ENCODE measurements at regions of chr1 and their contacts with region 1.

Region 1: GRCh38 chr1:205631727-205632373 is at the start of gene ELK4:
- DNase-seq: peak; percentile 99
- H3K4me3 Mint-ChIP-seq: peak within 1 kb of the TSS; percentile 97
- H3K27ac Mint-ChIP-seq: peak within 1 kb of the TSS; percentile 99
- H3K4me1 Mint-ChIP-seq: peaks cover 53% of the 10 kb centered on the region
- H3K27me3 Mint-ChIP-seq: peaks cover 10% of the 10 kb centered on the region
- total RNA-seq, gene ELK4: 81.1 and 86.2 TPM in 2 replicates

Region 2: DNA sequence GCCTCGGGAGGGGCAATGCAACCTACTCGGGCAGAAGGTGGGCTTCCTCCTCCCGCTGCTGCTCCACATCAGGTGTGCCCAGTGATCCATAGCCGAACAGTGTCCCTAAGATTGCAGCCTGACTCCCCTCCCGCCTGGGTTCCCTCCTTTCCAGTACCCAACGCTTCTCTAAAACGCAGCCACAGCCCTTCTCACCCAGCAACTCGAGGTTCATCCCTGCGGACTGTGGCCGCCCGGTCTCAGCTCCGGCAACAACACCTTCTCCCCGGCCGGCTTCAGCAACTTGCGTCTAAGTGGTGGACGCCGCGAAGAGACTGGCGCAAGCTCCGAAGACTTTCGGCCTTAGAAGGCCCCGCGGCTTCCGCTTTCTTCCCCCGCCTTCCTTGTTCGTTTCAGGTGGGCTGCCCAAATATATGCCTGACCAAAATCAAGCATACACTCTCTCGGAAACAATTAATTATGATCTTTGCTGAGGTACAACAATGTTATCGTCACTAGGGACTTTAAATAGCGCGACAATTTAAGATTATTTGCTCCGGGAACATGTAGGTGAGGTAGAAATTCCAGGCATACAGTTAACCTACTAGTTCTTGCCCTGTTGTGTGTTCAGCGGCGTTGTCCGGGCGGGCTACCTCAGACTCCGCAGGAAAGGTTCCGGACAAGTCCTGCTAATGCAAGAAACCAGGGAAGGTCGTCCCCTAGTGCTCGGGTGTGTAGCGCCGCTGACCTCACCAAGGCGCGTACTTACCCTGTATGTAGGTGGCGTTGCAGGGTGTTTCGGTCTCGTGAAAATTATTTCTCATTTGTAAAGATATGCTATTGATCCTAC is 510.0 kb before region 1 on chr1 and contains the start of gene RBBP5:
- intact Hi-C with region 1: loop called (anchors 2 kb)
- DNase-seq: peak; percentile 92
- H3K4me3 Mint-ChIP-seq: peak within 1 kb of the TSS; percentile 98
- H3K27ac Mint-ChIP-seq: peak within 1 kb of the TSS; percentile 98
- H3K4me1 Mint-ChIP-seq: peaks cover 39% of the 10 kb centered on the region
- H3K27me3 Mint-ChIP-seq: no peaks in the 10 kb centered on the region
- total RNA-seq, gene RBBP5: 21.5 and 24.7 TPM in 2 replicates

Region 3: DNA sequence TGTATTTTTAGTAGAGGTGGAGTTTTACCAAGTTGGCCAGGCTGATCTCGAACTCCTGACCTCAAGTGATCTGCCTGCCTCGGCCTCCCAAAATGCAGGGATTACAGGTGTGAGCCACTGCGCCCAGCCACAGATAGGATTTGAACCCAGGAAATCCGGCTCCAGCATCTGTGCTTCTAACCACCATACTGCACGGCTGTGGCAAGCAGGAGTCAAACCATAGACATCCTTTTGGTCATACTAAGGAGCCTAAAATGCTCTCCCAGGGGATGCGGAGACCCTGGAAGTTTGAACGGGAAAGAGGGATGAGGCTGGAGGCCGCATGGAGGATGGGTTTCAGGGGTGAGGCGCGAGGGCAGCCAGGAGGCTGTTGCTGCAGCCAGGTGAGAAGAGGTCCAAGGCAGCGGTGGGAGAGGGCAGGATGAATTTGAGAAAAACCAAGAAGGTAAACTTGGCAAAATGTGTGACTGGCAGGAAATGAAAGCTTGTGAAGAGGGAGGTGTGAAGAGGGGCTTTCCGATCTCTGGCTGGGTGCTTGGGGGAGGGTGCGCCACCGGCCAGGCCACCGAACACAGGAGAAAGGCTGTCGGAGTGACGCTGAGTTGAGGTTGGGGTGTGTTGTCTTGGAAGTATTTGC is 151.4 kb before region 1 on chr1:
- intact Hi-C with region 1: loop called (anchors 5 kb)
- DNase-seq: peak; percentile 54
- H3K4me3 Mint-ChIP-seq: peak overlapping the region; percentile 2
- H3K27ac Mint-ChIP-seq: peak overlapping the region; percentile 71
- H3K4me1 Mint-ChIP-seq: peaks cover 32% of the 10 kb centered on the region
- H3K27me3 Mint-ChIP-seq: peaks cover 31% of the 10 kb centered on the region

Region 4: DNA sequence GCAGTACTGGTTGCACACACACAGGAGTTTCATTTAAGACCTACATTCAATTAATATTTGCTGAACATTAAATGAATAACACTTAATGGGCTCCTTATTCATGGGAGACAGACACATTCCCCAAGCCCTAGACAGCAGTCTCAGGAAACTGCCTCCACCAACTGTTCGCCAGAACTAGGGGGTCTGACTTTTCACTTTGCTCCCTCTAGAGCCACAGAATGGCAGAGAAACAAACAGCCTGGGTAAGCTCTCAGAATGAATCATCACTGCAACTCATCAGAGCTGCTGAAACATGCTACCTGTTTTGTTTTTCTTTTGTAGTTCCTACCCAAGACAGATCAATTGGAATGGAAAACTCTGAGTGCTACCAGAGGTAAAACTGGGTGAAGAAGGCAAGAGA is 31.8 kb before region 1 on chr1:
- intact Hi-C with region 1: loop called (anchors 2 kb)
- DNase-seq: no peak
- H3K4me3 Mint-ChIP-seq: no peak overlapping the region
- H3K27ac Mint-ChIP-seq: peak overlapping the region; percentile 66
- H3K4me1 Mint-ChIP-seq: peaks cover 14% of the 10 kb centered on the region
- H3K27me3 Mint-ChIP-seq: no peaks in the 10 kb centered on the region

Region 5: GRCh38 chr1:205711104-205712020 is 79.5 kb after region 1 on chr1:
- intact Hi-C with region 1: loop called (anchors 1 kb)
- DNase-seq: peak; percentile 42
- H3K4me3 Mint-ChIP-seq: no peak overlapping the region
- H3K27ac Mint-ChIP-seq: peak overlapping the region; percentile 56
- H3K4me1 Mint-ChIP-seq: peaks cover 16% of the 10 kb centered on the region
- H3K27me3 Mint-ChIP-seq: no peaks in the 10 kb centered on the region

Region 6: DNA sequence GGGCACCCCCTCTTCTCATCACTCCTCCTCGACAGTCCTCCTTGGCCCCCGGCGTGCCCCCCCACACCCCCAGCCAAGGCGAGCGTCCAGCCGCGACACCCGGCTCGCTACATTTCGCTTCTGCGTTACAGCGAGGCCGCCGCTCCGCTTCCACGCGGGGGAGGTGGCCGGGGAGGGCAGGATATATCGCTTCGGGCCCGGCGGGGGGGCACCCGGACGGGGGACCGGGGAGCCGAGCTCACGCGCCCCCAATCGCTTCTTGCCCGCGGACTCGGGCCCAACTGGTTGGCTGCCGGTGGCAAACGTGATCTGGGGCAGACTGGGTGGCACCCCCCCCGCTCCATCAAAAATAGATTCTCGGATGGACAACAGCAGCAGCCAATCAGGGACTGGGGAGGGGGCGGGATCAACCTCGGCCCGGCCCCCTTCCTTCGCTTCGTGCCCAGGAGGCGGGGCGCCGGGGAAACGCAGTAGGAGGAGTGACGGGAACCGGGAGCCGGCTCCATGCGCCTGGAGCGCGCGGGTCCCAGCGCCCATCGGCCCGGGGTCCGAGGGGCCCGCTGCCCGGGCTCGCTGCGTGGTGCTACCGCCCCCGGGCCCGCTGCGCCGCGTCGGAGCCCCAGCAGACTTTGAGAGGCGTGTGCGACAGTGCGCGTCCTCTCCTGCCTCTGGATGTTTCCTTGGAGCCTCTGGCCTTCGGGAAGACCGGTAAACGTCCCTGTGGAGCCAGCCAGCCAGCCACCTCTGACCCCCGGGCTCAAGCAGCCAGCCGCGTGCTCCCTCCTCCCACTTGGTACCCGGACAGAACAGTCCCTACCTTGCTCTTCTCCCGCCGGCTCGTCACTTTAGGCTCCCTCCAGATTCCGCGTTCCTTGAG is 181.3 kb after region 1 on chr1 and contains the start of gene SLC41A1:
- intact Hi-C with region 1: loop called (anchors 1 kb)
- DNase-seq: peak; percentile 81
- H3K4me3 Mint-ChIP-seq: peak within 1 kb of the TSS; percentile 94
- H3K27ac Mint-ChIP-seq: peak within 1 kb of the TSS; percentile 85
- H3K4me1 Mint-ChIP-seq: peaks cover 49% of the 10 kb centered on the region
- H3K27me3 Mint-ChIP-seq: peaks cover 7% of the 10 kb centered on the region
- total RNA-seq, gene SLC41A1: 33.9 and 34.8 TPM in 2 replicates

Region 7: GRCh38 chr1:205977402-205978014 is 345.7 kb after region 1 on chr1:
- intact Hi-C with region 1: no loop called
- DNase-seq: peak; percentile 63
- H3K4me3 Mint-ChIP-seq: no peak overlapping the region
- H3K27ac Mint-ChIP-seq: no peak overlapping the region
- H3K4me1 Mint-ChIP-seq: no peaks in the 10 kb centered on the region
- H3K27me3 Mint-ChIP-seq: no peaks in the 10 kb centered on the region

Measured in activated T-helper 1 cell treated with anti-CD3 and anti-CD28 coated beads, Interleukin-12 subunit alpha, Interleukin-12 subunit beta, Interleukin-2, Interleukin-4 antibody, amounts not matched to agents 30 ng/mL and 10 ng/mL and 1 ng/mL, durations not matched to agents 14 hours and 24 hours and 36 hours (primary cell).